PC-3 (cell line): ENCODE measurements at regions of chr9 and their contacts with region 1.

Region 1: DNA sequence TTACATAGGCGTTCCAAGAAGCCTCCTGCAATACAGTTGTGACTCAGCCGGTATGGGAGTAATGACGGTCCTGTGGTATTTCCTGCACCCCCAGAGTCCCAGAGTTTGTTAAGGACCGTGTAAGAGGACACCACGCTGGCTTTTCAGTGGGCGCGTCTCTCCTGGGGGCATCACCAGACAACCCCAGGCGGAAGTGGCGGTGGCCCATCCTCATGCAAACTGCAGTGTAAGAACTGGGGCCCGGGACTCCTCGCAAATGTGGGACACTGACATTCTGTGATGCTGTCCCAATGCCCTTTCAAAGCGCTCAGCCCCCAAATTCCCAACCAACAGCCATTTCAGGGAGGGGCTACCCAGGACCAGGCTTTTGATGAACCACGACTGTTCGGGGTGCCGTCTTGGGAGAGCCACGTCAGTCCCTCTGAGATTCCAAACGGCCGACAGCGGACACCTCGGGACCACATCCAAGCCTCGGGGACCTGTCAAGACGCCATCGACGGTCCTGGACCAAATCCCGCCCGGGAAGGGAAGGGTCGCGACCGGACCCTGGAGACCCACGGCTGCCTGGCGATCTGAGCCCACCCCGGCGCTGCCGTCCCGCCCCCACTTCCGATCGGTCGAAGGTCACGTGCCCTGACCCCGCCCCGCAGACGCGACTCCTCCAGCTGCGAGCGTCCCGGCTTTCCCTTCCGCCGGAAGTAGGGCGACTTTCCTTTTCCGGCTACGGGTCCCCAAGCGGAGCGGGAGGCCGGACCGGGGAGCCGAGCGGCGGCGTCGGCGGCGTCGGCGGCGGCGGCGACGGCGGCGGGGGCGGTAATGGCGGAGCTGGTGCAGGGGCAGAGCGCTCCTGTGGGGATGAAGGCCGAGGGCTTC is at the start of gene FUBP3:
- DNase-seq: peak; percentile 82
- ATAC-seq: peak; percentile 89
- H3K4me3 ChIP-seq: peak within 1 kb of the TSS; percentile 97
- H3K27ac ChIP-seq: peak within 1 kb of the TSS; percentile 80
- H3K4me1 ChIP-seq: peaks cover 17% of the 10 kb centered on the region
- H3K27me3 ChIP-seq: no peaks in the 10 kb centered on the region
- CTCF ChIP-seq: no peak
- total RNA-seq, gene FUBP3: 53.7 and 59.6 TPM in 2 replicates

Region 2: GRCh38 chr9:130461218-130461630 is 117.9 kb before region 1 on chr9:
- CTCF ChIA-PET with region 1: no interaction called
- POLR2A ChIA-PET with region 1: no interaction called
- intact Hi-C with region 1: loop called (anchors 5 kb)
- DNase-seq: peak; percentile 60
- ATAC-seq: peak; percentile 59
- H3K4me3 ChIP-seq: no peak overlapping the region
- H3K27ac ChIP-seq: no peak overlapping the region
- H3K4me1 ChIP-seq: no peaks in the 10 kb centered on the region
- H3K27me3 ChIP-seq: no peaks in the 10 kb centered on the region
- CTCF ChIP-seq: peak; percentile 74

Region 3: DNA sequence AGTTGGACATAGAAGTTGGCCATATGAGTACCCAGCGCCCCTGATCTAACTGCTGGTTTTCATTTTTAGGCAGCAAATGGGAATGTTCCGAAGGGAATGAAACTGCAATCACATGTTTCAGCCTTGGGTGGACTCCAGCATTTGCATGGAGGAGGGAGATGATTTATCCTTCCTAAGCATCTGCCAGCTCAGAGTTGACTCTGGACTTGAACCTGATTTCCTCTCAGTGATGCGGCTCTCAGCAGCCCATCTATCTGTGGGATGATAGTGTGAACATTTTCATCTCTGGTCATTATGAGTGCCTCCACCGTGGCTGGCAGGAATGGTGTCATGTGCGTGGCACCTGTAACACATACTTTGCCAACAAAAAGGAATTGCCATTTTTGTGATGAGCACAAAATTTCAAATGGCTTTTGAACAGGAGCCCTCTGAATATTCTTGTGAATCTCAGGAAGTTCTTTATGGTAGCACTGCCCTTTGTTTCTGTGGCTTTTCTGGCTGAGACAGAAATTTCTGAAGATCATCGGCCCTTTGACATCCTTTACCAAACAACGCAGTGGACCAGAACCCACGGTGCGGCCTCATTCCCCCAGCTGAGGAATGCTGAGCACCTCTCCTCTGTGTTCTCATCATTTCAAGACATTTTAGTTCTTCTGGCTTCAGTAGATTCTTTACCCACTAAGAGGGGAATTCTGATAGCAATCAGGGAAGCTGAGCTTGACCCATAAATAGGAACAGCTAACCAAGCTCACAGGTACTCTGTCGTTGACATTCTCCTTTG is 28.7 kb after region 1 on chr9:
- CTCF ChIA-PET with region 1: no interaction called
- POLR2A ChIA-PET with region 1: interaction called, 13 read pairs
- intact Hi-C with region 1: no loop called
- DNase-seq: no peak
- ATAC-seq: no peak
- H3K4me3 ChIP-seq: no peak overlapping the region
- H3K27ac ChIP-seq: no peak overlapping the region
- H3K4me1 ChIP-seq: no peaks in the 10 kb centered on the region
- H3K27me3 ChIP-seq: no peaks in the 10 kb centered on the region
- CTCF ChIP-seq: no peak

Region 4: GRCh38 chr9:131031005-131031641 is 452.0 kb after region 1 on chr9:
- CTCF ChIA-PET with region 1: no interaction called
- POLR2A ChIA-PET with region 1: interaction called, 18 read pairs
- intact Hi-C with region 1: no loop called
- DNase-seq: no peak
- ATAC-seq: no peak
- H3K4me3 ChIP-seq: no peak overlapping the region
- H3K27ac ChIP-seq: no peak overlapping the region
- H3K4me1 ChIP-seq: no peaks in the 10 kb centered on the region
- H3K27me3 ChIP-seq: no peaks in the 10 kb centered on the region
- CTCF ChIP-seq: no peak